B cell (primary cell): ENCODE measurements at regions of chr5 and their contacts with region 1.

Region 1: GRCh38 chr5:172283020-172283861 is at the start of gene UBTD2:
- DNase-seq: peak; percentile 91
- ATAC-seq: peak; percentile 84
- H3K4me3 ChIP-seq: peak within 1 kb of the TSS; percentile 38 to 87 (median 79)
- H3K4me3 Mint-ChIP-seq: peak within 1 kb of the TSS; percentile 93
- H3K27ac ChIP-seq: peak within 1 kb of the TSS in 1 of 2 donors; percentile 74
- H3K27ac Mint-ChIP-seq: peak within 1 kb of the TSS; percentile 83
- H3K4me1 ChIP-seq: peaks cover 16 to 17% of the 10 kb centered on the region in 2 donors
- H3K4me1 Mint-ChIP-seq: peaks cover 20% of the 10 kb centered on the region
- H3K27me3 ChIP-seq: no peaks in the 10 kb centered on the region
- H3K27me3 Mint-ChIP-seq: no peaks in the 10 kb centered on the region
- CTCF ChIP-seq: peak; percentile 72
- total RNA-seq, gene UBTD2: 9.2 and 10.6 TPM in 2 replicates

Region 2: DNA sequence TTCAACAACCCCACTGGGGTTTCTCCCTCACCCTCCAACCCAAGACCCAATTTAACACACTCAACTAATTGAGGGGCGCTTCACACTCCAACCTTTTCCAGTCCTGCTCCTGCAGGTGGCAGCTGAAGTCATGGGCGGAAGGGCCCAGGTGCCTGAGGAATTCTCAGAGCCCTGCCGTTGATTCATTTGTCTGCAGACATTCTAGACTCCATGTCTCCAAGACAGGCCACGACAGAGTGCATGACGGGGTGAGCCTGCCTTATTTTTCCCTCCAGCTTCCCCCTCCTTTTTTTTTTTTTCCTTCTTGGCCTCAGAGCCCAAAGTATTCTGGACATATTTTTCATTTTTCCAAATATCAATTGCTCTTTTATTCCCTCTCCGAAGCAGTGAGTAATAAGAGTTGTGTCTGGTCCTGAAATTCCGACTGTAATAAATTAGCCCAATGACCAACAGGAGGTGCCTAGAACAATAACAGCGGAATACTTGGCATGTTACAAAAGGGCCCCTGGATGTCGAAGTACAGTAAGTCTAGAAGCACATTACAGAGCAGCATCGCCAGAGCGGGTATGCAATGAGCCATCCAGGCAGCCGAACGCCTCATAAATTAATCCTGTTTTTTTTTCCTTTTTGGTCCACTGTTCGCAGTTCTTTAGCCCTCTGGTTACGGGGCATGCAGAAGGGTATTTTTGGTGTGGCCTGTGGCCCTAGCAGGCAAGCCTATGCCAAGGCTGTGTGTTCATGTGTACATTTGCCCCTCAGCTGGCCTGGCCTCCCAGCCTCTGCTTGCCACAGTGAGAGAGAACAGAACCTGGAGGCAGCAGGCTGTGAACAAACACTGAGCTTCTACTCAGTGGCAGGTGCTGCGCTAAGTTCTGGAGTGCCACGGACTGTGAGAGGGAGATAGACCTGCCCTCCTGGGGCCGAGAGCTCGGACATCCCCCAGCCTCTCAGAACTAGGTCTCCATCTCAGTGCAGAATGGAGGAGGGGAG is 506.2 kb before region 1 on chr5:
- CTCF ChIA-PET with region 1: no interaction called
- POLR2A ChIA-PET with region 1: no interaction called
- intact Hi-C with region 1: no loop called
- DNase-seq: no peak
- ATAC-seq: no peak
- H3K4me3 ChIP-seq: no peak overlapping the region
- H3K4me3 Mint-ChIP-seq: no peak overlapping the region
- H3K27ac ChIP-seq: no peak overlapping the region
- H3K27ac Mint-ChIP-seq: no peak overlapping the region
- H3K4me1 ChIP-seq: no peaks in the 10 kb centered on the region
- H3K4me1 Mint-ChIP-seq: no peaks in the 10 kb centered on the region
- H3K27me3 ChIP-seq: peaks cover 0 to 5% (median 0%) of the 10 kb centered on the region in 4 experiments
- H3K27me3 Mint-ChIP-seq: peaks cover 5% of the 10 kb centered on the region
- CTCF ChIP-seq: no peak

Region 3: DNA sequence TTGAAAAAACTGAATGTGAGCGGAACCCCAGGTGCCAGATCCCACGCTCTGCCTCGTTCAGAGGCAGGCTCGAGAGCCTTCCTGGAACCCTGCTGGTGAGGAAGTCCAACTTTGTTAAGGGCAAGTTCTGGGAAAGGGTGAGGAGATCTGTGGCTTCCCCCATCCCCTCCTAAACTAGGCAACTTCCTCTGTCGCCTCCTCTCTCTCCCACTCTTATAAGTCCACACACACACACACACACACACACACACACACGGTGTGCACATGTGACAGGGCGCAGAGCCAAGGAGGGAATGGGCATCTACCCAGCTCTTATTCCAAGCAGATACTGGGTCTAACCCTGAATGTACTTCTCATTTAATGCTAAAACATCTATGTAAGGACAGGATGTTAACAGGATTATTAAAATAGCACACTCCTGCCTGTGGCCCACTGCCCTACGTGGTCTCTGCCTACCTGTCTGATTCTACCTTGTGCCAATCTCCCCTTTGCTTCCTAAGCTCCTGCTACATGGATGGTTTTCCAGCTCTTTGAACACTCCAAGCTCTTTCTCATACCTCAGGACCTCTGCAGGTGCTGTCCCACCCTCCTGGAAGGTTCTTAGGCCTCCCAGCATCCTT is 204.4 kb before region 1 on chr5:
- CTCF ChIA-PET with region 1: no interaction called
- POLR2A ChIA-PET with region 1: no interaction called
- intact Hi-C with region 1: no loop called
- DNase-seq: no peak
- ATAC-seq: no peak
- H3K4me3 ChIP-seq: no peak overlapping the region
- H3K4me3 Mint-ChIP-seq: no peak overlapping the region
- H3K27ac ChIP-seq: no peak overlapping the region
- H3K27ac Mint-ChIP-seq: peak overlapping the region; percentile 23
- H3K4me1 ChIP-seq: no peaks in the 10 kb centered on the region
- H3K4me1 Mint-ChIP-seq: no peaks in the 10 kb centered on the region
- H3K27me3 ChIP-seq: no peaks in the 10 kb centered on the region
- H3K27me3 Mint-ChIP-seq: no peaks in the 10 kb centered on the region
- CTCF ChIP-seq: no peak

Region 4: DNA sequence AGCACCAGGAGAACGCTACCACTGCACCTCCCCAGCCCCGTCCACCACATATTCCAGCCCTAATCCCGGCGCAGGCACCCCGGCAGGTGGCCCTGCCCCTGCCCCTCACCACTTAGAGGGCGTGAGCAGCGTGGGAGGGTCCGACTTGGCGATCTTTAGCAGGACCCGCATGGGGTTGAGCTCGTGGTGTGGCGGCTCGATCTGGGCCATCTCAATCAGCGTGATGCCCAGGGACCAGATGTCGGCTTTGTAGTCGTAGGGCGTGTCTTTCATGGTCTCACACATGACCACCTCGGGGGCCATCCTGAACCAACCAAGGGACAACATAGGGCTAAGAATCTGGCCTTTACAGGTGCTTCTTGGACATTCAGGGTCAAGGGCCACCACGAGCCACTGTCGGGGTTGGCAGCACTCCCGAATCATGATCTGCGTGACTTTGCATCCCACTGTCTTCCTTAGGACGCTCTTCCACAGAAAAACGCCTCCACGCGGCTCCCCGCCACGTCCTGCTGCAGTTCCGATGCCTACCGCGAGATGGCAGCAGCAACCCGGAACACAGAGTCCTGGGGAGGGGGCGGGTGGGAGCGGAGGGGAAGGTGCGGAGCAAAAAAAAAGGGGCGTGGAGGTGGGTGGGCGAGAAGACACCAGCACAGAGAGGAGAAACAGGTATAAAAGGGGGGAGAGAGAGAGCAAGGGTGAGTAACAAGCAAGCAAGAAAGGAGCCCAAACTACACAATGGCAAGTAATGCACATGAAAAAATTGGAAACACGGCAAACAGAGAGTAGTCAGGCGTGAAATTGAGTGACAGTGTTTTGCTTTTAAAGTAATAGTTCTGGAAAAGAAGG is 176.5 kb before region 1 on chr5:
- CTCF ChIA-PET with region 1: interaction called, 9 read pairs
- POLR2A ChIA-PET with region 1: interaction called, 4 read pairs
- intact Hi-C with region 1: loop called (anchors 1 kb)
- DNase-seq: peak; percentile 76
- ATAC-seq: no peak
- H3K4me3 ChIP-seq: no peak overlapping the region
- H3K4me3 Mint-ChIP-seq: no peak overlapping the region
- H3K27ac ChIP-seq: peak overlapping the region in 1 of 2 donors; percentile 41
- H3K27ac Mint-ChIP-seq: peak overlapping the region; percentile 70
- H3K4me1 ChIP-seq: peaks cover 31 to 40% of the 10 kb centered on the region in 2 donors
- H3K4me1 Mint-ChIP-seq: peaks cover 35% of the 10 kb centered on the region
- H3K27me3 ChIP-seq: no peaks in the 10 kb centered on the region
- H3K27me3 Mint-ChIP-seq: no peaks in the 10 kb centered on the region
- CTCF ChIP-seq: peak; percentile 92